Posterior vena cava (tissue), 2 donors: ENCODE measurements at regions of chr12 and their contacts with region 1.

Region 1: GRCh38 chr12:110203546-110203945 is 77.5 kb upstream of the ATP2A2 start:
- DNase-seq: no peak

Region 2: DNA sequence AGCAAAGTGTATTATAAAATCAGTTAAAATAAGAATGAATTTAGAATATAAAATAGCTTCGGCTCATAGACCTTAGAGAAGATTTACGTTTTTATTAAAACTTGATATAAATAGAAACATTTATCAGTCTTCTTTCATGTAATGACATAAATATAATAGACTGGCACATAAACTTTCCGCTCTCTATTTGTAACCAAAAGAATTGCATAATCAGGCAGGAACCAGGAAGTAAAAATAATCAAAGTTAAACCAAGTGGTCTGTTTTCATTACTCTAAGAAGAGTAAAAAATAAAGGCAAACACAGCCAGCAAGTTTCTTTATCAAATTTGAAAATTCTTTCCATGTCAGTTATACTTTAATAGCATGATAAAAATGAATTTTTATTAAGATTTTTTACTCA is 31.2 kb after region 1 on chr12:
- intact Hi-C with region 1: loop called in 1 of 2 experiments (anchors 2 kb)
- DNase-seq: no peak

Region 3: GRCh38 chr12:112170376-112170775 is 1966.8 kb after region 1 on chr12:
- intact Hi-C with region 1: loop called in 1 of 2 experiments (anchors 5 kb)
- DNase-seq: peak; percentile 56